A673 (cell line): ENCODE measurements at regions of chrX and their contacts with region 1.

Region 1: GRCh38 chrX:101799387-101799786 is 132.4 kb downstream of the ZMAT1 start:
- DNase-seq: peak; percentile 93
- H3K4me3 ChIP-seq: no peak overlapping the region
- H3K27ac ChIP-seq: no peak overlapping the region
- H3K4me1 ChIP-seq: no peaks in the 10 kb centered on the region
- H3K27me3 ChIP-seq: no peaks in the 10 kb centered on the region
- CTCF ChIP-seq: peak; percentile 72

Region 2: DNA sequence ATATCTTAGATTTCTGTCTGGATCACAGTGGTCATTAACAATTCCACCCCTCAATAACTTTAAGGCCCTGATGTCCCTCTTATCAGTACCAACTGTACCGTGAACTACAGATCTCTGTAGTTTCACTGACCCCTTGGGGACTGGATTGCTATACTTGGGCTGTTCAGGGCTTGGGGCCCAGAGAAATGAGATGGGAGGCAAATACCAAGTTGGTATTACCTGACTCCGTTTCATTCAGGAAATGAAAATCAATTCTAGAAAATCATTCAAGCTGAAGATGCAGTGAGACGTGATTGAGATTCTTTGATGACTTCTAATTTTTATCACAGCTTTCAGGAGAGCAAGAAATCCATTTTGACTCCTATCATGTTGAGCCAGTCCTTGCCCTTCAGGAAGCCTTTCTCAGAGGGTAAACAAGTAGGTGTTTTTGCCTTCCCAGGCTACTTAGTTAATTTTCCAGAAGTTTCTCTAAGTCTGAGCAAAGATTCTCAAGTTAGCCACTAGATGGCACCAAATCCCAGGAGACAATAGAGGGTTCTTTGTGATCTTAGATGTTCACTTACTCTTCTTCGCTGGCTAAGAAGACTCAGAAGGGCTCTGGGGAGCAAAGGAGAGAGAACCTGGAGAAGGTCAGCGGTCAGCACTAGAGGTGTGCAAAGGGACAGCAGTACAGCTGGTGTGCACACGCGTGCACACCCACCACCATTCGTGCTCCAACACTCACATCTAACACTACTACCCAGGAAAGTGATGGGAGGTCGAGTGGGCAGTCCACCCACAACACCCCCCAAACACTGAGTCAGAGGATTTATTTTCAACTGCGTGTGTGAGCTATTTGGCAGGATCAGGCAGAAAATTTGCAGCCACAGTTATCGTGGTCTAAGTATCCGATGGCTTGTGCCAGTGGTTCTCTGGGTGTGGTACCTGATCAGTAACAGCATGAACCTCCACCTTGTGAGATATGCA is 383.9 kb before region 1 on chrX:
- CTCF ChIA-PET with region 1: no interaction called
- POLR2A ChIA-PET with region 1: no interaction called
- intact Hi-C with region 1: loop called (anchors 2 kb)
- DNase-seq: peak; percentile 84
- H3K4me3 ChIP-seq: no peak overlapping the region
- H3K27ac ChIP-seq: no peak overlapping the region
- H3K4me1 ChIP-seq: no peaks in the 10 kb centered on the region
- H3K27me3 ChIP-seq: no peaks in the 10 kb centered on the region
- CTCF ChIP-seq: peak; percentile 81

Region 3: GRCh38 chrX:101485199-101485949 is 314.0 kb before region 1 on chrX and contains the start of gene ARMCX4:
- CTCF ChIA-PET with region 1: no interaction called
- POLR2A ChIA-PET with region 1: no interaction called
- intact Hi-C with region 1: no loop called
- DNase-seq: peak; percentile 60
- H3K4me3 ChIP-seq: peak within 1 kb of the TSS; percentile 53
- H3K27ac ChIP-seq: peak within 1 kb of the TSS; percentile 37
- H3K4me1 ChIP-seq: no peaks in the 10 kb centered on the region
- H3K27me3 ChIP-seq: no peaks in the 10 kb centered on the region
- CTCF ChIP-seq: no peak
- total RNA-seq, gene ARMCX4: 12.0 and 13.3 TPM in 2 replicates

Region 4: GRCh38 chrX:101595739-101596419 is 203.5 kb before region 1 on chrX:
- CTCF ChIA-PET with region 1: no interaction called
- POLR2A ChIA-PET with region 1: no interaction called
- intact Hi-C with region 1: loop called (anchors 5 kb)
- DNase-seq: peak; percentile 83
- H3K4me3 ChIP-seq: no peak overlapping the region
- H3K27ac ChIP-seq: no peak overlapping the region
- H3K4me1 ChIP-seq: no peaks in the 10 kb centered on the region
- H3K27me3 ChIP-seq: no peaks in the 10 kb centered on the region
- CTCF ChIP-seq: peak; percentile 71

Region 5: GRCh38 chrX:101617211-101618191 is 181.9 kb before region 1 on chrX and contains the start of gene ARMCX6:
- CTCF ChIA-PET with region 1: no interaction called
- POLR2A ChIA-PET with region 1: no interaction called
- intact Hi-C with region 1: loop called (anchors 5 kb)
- DNase-seq: peak; percentile 79
- H3K4me3 ChIP-seq: peak within 1 kb of the TSS; percentile 71
- H3K27ac ChIP-seq: peak within 1 kb of the TSS; percentile 70
- H3K4me1 ChIP-seq: peaks cover 12% of the 10 kb centered on the region
- H3K27me3 ChIP-seq: no peaks in the 10 kb centered on the region
- CTCF ChIP-seq: peak; percentile 47; the same call in 1 of the 2 replicates
- total RNA-seq, gene ARMCX6: 39.9 and 44.7 TPM in 2 replicates

Region 6: DNA sequence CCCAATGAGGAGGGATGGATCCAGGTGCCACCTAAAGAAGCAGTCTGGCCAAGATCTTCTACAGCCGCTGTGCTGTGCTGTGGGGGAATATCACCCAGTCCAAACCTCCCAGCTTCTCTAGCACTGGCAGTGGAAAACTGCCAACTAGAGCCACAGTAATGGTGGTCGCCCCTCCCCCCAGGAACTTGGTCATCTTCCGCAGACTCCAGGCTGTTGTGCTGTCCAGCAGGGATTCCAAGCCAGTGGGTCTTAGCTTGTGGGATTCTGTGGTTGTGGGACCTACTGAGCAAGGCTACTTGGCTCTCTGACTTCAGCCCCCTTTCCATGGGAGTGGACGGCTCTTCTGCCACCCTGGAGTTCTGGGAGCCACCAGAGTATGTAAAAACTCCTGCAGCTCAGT is 870.1 kb after region 1 on chrX:
- CTCF ChIA-PET with region 1: no interaction called
- POLR2A ChIA-PET with region 1: interaction called, 11 read pairs
- intact Hi-C with region 1: no loop called
- DNase-seq: no peak
- H3K4me3 ChIP-seq: no peak overlapping the region
- H3K27ac ChIP-seq: no peak overlapping the region
- H3K4me1 ChIP-seq: no peaks in the 10 kb centered on the region
- H3K27me3 ChIP-seq: no peaks in the 10 kb centered on the region
- CTCF ChIP-seq: no peak